CD8-positive, alpha-beta T cell (primary cell): ENCODE measurements at regions of chr16 and their contacts with region 1.

Region 1: DNA sequence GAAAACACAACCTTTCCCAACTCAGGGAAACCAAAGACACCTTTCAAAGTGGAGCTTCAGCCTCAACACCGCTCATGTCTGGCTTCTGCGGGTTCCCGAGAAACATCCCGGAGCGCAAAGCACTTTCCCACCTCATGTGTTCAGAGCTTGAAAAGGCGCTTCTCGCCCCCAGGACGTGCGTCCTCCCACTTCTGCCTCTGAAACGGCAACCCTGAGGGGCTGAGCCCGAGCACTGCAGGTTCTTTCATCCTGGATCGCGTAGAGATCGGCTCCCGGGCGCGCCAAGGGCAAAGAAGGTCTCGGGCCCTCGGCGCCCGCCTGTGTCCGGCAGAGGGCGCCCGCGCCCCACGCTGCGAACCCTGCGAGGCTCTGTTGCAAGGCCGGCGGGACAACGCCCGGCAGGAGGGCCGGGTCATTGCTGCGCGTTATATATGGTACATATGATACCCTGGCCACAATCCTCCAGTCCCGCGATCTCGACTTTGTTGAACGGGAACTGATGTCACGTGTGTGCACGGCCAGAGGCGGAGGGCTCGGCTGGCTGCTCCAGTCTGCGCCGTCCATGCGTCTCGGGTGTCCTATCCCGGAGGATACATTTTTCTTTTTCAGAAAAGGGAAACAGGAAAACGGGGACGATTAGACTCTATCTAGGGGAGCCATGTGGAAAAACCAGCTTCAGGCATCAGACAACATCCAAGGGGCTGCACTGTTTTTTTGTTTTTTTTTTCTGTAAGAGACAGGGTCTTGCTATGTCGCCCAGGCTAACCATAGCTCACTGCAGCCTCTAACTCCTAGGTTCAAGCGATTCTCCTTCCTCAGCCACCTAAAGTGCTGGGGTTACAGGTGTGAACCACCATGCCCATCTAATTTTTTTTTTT is 19.1 kb downstream of the COQ7 start:
- DNase-seq: peak; percentile 53 to 87 (median 72)
- ATAC-seq: peak; percentile 91
- H3K4me3 ChIP-seq: peak overlapping the region; percentile 25 to 40
- H3K4me3 Mint-ChIP-seq: peak overlapping the region; percentile 63
- H3K27ac ChIP-seq: no peak overlapping the region
- H3K27ac Mint-ChIP-seq: no peak overlapping the region
- H3K4me1 ChIP-seq: peaks cover 3% of the 10 kb centered on the region
- H3K4me1 Mint-ChIP-seq: peaks cover 3% of the 10 kb centered on the region
- H3K27me3 ChIP-seq: peaks cover 0 to 4% of the 10 kb centered on the region in 2 experiments
- H3K27me3 Mint-ChIP-seq: peaks cover 2% of the 10 kb centered on the region
- CTCF ChIP-seq: peak; percentile 98

Region 2: DNA sequence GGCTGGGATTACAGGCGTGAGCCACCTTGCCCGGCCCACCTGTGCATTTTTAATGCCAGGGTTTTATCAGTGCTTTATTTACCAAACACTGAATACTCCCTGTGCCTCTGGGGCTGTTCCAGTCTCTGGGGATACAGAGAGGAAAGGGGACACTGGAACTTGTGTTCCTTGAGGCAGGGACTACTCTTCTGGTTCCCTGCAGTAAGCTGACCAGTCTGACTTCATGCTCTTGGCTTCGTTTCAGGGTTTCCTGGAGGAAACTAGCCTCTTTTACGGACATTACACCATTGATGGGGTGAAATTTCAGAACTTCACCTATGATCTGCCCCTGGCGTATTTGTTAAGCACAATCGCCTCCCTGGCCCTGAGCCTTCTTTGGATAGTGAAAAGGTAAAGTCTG is 56.6 kb before region 1 on chr16:
- CTCF ChIA-PET with region 1: no interaction called
- POLR2A ChIA-PET with region 1: no interaction called
- intact Hi-C with region 1: no loop called
- DNase-seq: no peak
- ATAC-seq: no peak
- H3K4me3 ChIP-seq: no peak overlapping the region
- H3K4me3 Mint-ChIP-seq: no peak overlapping the region
- H3K27ac ChIP-seq: no peak overlapping the region
- H3K27ac Mint-ChIP-seq: no peak overlapping the region
- H3K4me1 ChIP-seq: no peaks in the 10 kb centered on the region
- H3K4me1 Mint-ChIP-seq: no peaks in the 10 kb centered on the region
- H3K27me3 ChIP-seq: no peaks in the 10 kb centered on the region
- H3K27me3 Mint-ChIP-seq: peaks cover 11% of the 10 kb centered on the region
- CTCF ChIP-seq: no peak

Region 3: DNA sequence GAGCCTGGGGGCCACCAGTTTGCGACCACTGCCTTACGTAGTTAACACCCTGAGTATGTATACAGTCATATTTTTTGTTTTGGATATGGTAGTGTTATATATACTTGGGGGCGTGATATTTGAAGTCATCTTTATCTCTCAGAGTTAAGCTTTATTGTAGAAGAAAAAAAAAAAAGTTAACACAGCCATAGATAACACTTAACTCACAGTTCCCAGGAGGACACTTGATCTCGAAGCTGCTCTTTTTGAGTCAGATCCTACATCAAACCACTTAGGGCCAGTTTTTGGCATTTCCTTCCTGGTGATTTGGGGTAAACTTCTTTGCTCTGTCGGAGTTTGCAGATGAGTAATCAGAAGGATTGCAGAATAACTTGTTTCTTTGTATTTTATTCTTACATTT is 33.0 kb after region 1 on chr16:
- CTCF ChIA-PET with region 1: no interaction called
- POLR2A ChIA-PET with region 1: no interaction called
- intact Hi-C with region 1: no loop called
- DNase-seq: peak in 1 of 9 experiments; percentile 21
- ATAC-seq: no peak
- H3K4me3 ChIP-seq: peak overlapping the region in 1 of 2 experiments; percentile 30
- H3K4me3 Mint-ChIP-seq: no peak overlapping the region
- H3K27ac ChIP-seq: peak overlapping the region in 1 of 2 experiments; percentile 69
- H3K27ac Mint-ChIP-seq: no peak overlapping the region
- H3K4me1 ChIP-seq: no peaks in the 10 kb centered on the region
- H3K4me1 Mint-ChIP-seq: peaks cover 8% of the 10 kb centered on the region
- H3K27me3 ChIP-seq: no peaks in the 10 kb centered on the region
- H3K27me3 Mint-ChIP-seq: peaks cover 15% of the 10 kb centered on the region
- CTCF ChIP-seq: no peak

Region 4: GRCh38 chr16:19375561-19376158 is 289.1 kb after region 1 on chr16:
- CTCF ChIA-PET with region 1: interaction called, 4 read pairs
- POLR2A ChIA-PET with region 1: no interaction called
- intact Hi-C with region 1: loop called in 1 of 2 experiments (anchors 1 kb)
- DNase-seq: peak in 3 of 9 experiments; percentile 5 to 47 (median 30)
- ATAC-seq: no peak
- H3K4me3 ChIP-seq: no peak overlapping the region
- H3K4me3 Mint-ChIP-seq: no peak overlapping the region
- H3K27ac ChIP-seq: no peak overlapping the region
- H3K27ac Mint-ChIP-seq: no peak overlapping the region
- H3K4me1 ChIP-seq: no peaks in the 10 kb centered on the region
- H3K4me1 Mint-ChIP-seq: no peaks in the 10 kb centered on the region
- H3K27me3 ChIP-seq: no peaks in the 10 kb centered on the region
- H3K27me3 Mint-ChIP-seq: no peaks in the 10 kb centered on the region
- CTCF ChIP-seq: peak; percentile 55

Region 5: GRCh38 chr16:19502395-19503131 is 416.0 kb after region 1 on chr16:
- CTCF ChIA-PET with region 1: interaction called, 58 read pairs
- POLR2A ChIA-PET with region 1: no interaction called
- intact Hi-C with region 1: loop called (anchors 1 kb)
- DNase-seq: peak; percentile 27 to 73 (median 62)
- ATAC-seq: peak; percentile 38
- H3K4me3 ChIP-seq: no peak overlapping the region
- H3K4me3 Mint-ChIP-seq: no peak overlapping the region
- H3K27ac ChIP-seq: no peak overlapping the region
- H3K27ac Mint-ChIP-seq: no peak overlapping the region
- H3K4me1 ChIP-seq: no peaks in the 10 kb centered on the region
- H3K4me1 Mint-ChIP-seq: no peaks in the 10 kb centered on the region
- H3K27me3 ChIP-seq: no peaks in the 10 kb centered on the region
- H3K27me3 Mint-ChIP-seq: no peaks in the 10 kb centered on the region
- CTCF ChIP-seq: peak; percentile 70